Naive thymus-derived CD4-positive, alpha-beta T cell (primary cell): ENCODE measurements at regions of chr4 and their contacts with region 1.

Region 1: DNA sequence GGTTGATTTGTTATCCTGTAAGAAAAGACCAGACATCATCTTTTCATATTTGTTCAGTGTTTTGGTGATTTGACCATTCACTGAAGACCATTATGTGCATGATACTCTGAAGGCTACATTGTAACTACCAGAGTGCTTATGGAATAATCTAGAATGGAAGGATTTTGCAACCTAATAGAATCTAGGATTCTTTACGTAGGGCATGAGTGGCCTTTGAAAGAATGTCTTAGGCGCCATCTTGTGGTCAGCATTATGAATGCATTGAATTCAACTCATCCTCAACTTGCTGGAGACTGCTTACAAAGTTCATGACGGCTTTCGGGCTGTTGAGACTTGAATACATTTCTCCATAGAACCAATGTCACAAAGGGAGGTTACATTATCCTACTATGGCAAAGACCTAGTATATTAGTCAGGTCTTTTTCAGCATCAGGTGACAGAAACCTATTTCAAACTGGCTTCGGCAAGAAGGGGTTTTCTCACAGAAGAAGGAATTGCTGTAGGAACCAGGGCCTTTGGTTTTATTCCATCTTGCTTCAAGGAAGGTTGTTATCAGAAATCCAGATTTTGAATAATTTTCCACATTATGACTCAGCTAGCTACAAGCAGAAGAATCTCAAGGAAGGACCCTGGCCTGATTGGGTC is 104.1 kb downstream of the GPAT3 start:
- DNase-seq: peak in 7 of 9 donors; percentile 38 to 66 (median 61)
- ATAC-seq: peak; percentile 79
- H3K4me3 ChIP-seq: no peak overlapping the region
- H3K4me3 Mint-ChIP-seq: no peak overlapping the region
- H3K27ac ChIP-seq: no peak overlapping the region
- H3K27ac Mint-ChIP-seq: no peak overlapping the region
- H3K4me1 ChIP-seq: no peaks in the 10 kb centered on the region
- H3K4me1 Mint-ChIP-seq: peaks cover 0 to 4% (median 3%) of the 10 kb centered on the region in 7 donors
- H3K27me3 ChIP-seq: no peaks in the 10 kb centered on the region
- H3K27me3 Mint-ChIP-seq: peaks cover 0 to 14% (median 5%) of the 10 kb centered on the region in 5 donors

Region 2: GRCh38 chr4:82462415-82462831 is 1177.5 kb before region 1 on chr4:
- CTCF ChIA-PET with region 1: no interaction called
- POLR2A ChIA-PET with region 1: no interaction called
- intact Hi-C with region 1: loop called in 1 of 2 experiments (anchors 1 kb)
- DNase-seq: peak; percentile 60 to 83 (median 79)
- ATAC-seq: peak; percentile 96
- H3K4me3 ChIP-seq: no peak overlapping the region
- H3K4me3 Mint-ChIP-seq: no peak overlapping the region
- H3K27ac ChIP-seq: no peak overlapping the region
- H3K27ac Mint-ChIP-seq: peak overlapping the region in 1 of 9 donors; percentile 34
- H3K4me1 ChIP-seq: no peaks in the 10 kb centered on the region
- H3K4me1 Mint-ChIP-seq: peaks cover 0 to 5% (median 0%) of the 10 kb centered on the region in 7 donors
- H3K27me3 ChIP-seq: no peaks in the 10 kb centered on the region
- H3K27me3 Mint-ChIP-seq: no peaks in the 10 kb centered on the region

Region 3: GRCh38 chr4:82561745-82562515 is 1078.0 kb before region 1 on chr4 and contains the start of gene TMEM150C:
- CTCF ChIA-PET with region 1: no interaction called
- POLR2A ChIA-PET with region 1: no interaction called
- intact Hi-C with region 1: no loop called
- DNase-seq: no peak
- ATAC-seq: peak; percentile 22
- H3K4me3 ChIP-seq: no peak within 1 kb of the TSS
- H3K4me3 Mint-ChIP-seq: peak within 1 kb of the TSS; percentile 69 to 86 (median 82)
- H3K27ac ChIP-seq: no peak within 1 kb of the TSS
- H3K27ac Mint-ChIP-seq: peak within 1 kb of the TSS in 1 of 9 donors; percentile 11
- H3K4me1 ChIP-seq: no peaks in the 10 kb centered on the region
- H3K4me1 Mint-ChIP-seq: peaks cover 5 to 21% (median 18%) of the 10 kb centered on the region in 7 donors
- H3K27me3 ChIP-seq: no peaks in the 10 kb centered on the region
- H3K27me3 Mint-ChIP-seq: peaks cover 59 to 78% (median 72%) of the 10 kb centered on the region in 5 donors
- total RNA-seq, gene TMEM150C: not detected

Region 4: DNA sequence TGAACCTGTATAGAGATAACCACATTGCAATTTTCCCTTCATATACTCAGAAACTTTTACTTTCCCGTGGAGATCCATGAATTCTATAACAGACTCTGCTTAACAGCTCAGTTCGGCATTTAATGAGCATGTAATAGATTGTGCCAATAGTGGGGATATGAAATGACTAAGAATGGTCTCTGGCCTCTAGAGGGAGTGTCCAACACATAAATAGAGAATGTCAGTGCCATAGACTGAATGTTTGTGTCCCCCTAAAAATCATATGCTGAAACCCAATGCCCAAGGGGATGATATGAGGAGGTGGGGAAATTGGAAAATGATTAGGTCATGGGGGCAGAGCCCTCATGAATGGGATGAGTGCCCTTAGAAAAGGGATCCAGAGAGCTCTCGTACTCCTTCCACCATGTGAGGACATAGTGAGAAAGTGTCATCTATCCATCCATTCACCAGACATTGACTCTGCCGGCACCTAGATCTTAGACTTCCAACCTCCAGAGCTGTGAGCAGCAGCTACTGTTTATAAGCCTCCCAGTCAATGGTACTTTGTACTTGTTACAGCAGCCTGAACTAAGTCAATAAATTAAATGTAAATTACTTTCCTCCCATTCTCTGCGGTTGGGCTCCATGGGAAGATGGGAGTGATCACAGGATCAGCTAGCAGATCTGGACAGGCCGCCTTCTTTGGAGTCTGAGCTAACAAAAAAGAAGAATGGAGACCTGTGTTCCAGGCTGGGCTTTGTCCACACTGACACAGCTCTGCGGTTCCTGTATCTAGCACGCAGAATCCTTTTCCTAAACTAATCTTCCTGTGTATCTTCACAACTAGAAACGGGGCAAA is 277.3 kb before region 1 on chr4:
- CTCF ChIA-PET with region 1: interaction called, 4 read pairs
- POLR2A ChIA-PET with region 1: no interaction called
- intact Hi-C with region 1: loop called (anchors 1 kb)
- DNase-seq: no peak
- ATAC-seq: peak; percentile 68
- H3K4me3 ChIP-seq: no peak overlapping the region
- H3K4me3 Mint-ChIP-seq: no peak overlapping the region
- H3K27ac ChIP-seq: no peak overlapping the region
- H3K27ac Mint-ChIP-seq: no peak overlapping the region
- H3K4me1 ChIP-seq: no peaks in the 10 kb centered on the region
- H3K4me1 Mint-ChIP-seq: peaks cover 0 to 2% (median 0%) of the 10 kb centered on the region in 7 donors
- H3K27me3 ChIP-seq: no peaks in the 10 kb centered on the region
- H3K27me3 Mint-ChIP-seq: peaks cover 0 to 8% (median 4%) of the 10 kb centered on the region in 5 donors

Region 5: GRCh38 chr4:83490876-83491450 is 149.0 kb before region 1 on chr4:
- CTCF ChIA-PET with region 1: interaction called, 15 read pairs
- POLR2A ChIA-PET with region 1: no interaction called
- intact Hi-C with region 1: loop called (anchors 1 kb)
- DNase-seq: peak in 6 of 9 donors; percentile 17 to 45 (median 31)
- ATAC-seq: peak; percentile 81
- H3K4me3 ChIP-seq: no peak overlapping the region
- H3K4me3 Mint-ChIP-seq: no peak overlapping the region
- H3K27ac ChIP-seq: no peak overlapping the region
- H3K27ac Mint-ChIP-seq: no peak overlapping the region
- H3K4me1 ChIP-seq: no peaks in the 10 kb centered on the region
- H3K4me1 Mint-ChIP-seq: peaks cover 3 to 12% (median 10%) of the 10 kb centered on the region in 7 donors
- H3K27me3 ChIP-seq: no peaks in the 10 kb centered on the region
- H3K27me3 Mint-ChIP-seq: peaks cover 0 to 4% (median 0%) of the 10 kb centered on the region in 5 donors

Region 6: GRCh38 chr4:83535520-83536361 is 104.2 kb before region 1 on chr4 and contains the start of gene GPAT3:
- CTCF ChIA-PET with region 1: no interaction called
- POLR2A ChIA-PET with region 1: no interaction called
- intact Hi-C with region 1: loop called in 1 of 2 experiments (anchors 1 kb)
- DNase-seq: peak; percentile 37 to 76 (median 58)
- ATAC-seq: peak; percentile 89
- H3K4me3 ChIP-seq: peak within 1 kb of the TSS; percentile 80
- H3K4me3 Mint-ChIP-seq: peak within 1 kb of the TSS; percentile 87 to 97 (median 90)
- H3K27ac ChIP-seq: peak within 1 kb of the TSS; percentile 56
- H3K27ac Mint-ChIP-seq: peak within 1 kb of the TSS; percentile 24 to 92 (median 73)
- H3K4me1 ChIP-seq: peaks cover 0 to 8% of the 10 kb centered on the region in 2 donors
- H3K4me1 Mint-ChIP-seq: peaks cover 13 to 37% (median 17%) of the 10 kb centered on the region in 7 donors
- H3K27me3 ChIP-seq: no peaks in the 10 kb centered on the region
- H3K27me3 Mint-ChIP-seq: peaks cover 0 to 59% (median 20%) of the 10 kb centered on the region in 5 donors
- total RNA-seq, gene GPAT3: 3.0 to 14.6 (median 5.8) TPM

Region 7: DNA sequence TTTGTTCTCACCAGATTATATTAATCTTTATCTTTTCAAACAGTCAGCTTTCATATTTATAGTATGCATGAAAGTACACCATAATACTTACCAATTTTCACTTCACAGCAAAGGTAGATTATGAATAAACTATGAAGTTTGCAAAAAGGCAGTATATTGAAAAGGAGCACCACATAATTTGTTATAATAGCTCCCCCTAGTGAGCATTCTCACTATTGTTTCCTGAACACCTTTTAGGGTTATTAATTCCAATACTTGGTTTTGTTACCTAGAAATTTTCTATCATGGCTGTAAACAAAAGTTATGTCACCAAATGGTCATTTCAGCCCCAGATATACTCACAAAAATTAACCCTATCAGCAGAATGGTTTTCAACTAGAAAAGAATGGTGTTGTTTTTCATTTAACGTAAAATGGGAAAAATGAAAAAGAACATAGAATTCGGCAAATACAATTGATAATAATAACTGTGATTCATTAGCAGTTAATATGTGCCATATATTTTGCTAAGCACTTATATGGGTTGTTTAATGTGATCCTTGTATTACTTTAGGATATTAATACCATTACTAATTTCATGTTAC is 889.3 kb after region 1 on chr4:
- CTCF ChIA-PET with region 1: interaction called, 3 read pairs
- POLR2A ChIA-PET with region 1: no interaction called
- intact Hi-C with region 1: loop called (anchors 1 kb)
- DNase-seq: peak in 5 of 9 donors; percentile 13 to 37 (median 19)
- ATAC-seq: no peak
- H3K4me3 ChIP-seq: no peak overlapping the region
- H3K4me3 Mint-ChIP-seq: no peak overlapping the region
- H3K27ac ChIP-seq: no peak overlapping the region
- H3K27ac Mint-ChIP-seq: no peak overlapping the region
- H3K4me1 ChIP-seq: no peaks in the 10 kb centered on the region
- H3K4me1 Mint-ChIP-seq: no peaks in the 10 kb centered on the region
- H3K27me3 ChIP-seq: no peaks in the 10 kb centered on the region
- H3K27me3 Mint-ChIP-seq: peaks cover 10 to 44% (median 31%) of the 10 kb centered on the region in 5 donors